ENCODE measurements at regions of chr22 and their contacts with region 1.

Region 1: GRCh38 chr22:49838771-49839717 is 11.4 kb upstream of the BRD1 start:
- DNase-seq: peak; percentile 91 to 98 (median 95)
- H3K4me3 ChIP-seq: peak overlapping the region; percentile 7 to 53
- H3K4me3 Mint-ChIP-seq: peak overlapping the region; percentile 71 to 91 (median 84)
- H3K27ac ChIP-seq: peak overlapping the region; percentile 79
- H3K27ac Mint-ChIP-seq: peak overlapping the region; percentile 80 to 99 (median 97)
- H3K4me1 ChIP-seq: peaks cover 31% of the 10 kb centered on the region
- H3K4me1 Mint-ChIP-seq: peaks cover 16 to 38% (median 25%) of the 10 kb centered on the region in 4 donors
- H3K27me3 ChIP-seq: no peaks in the 10 kb centered on the region
- H3K27me3 Mint-ChIP-seq: no peaks in the 10 kb centered on the region

Region 2: GRCh38 chr22:49415151-49415951 is 423.7 kb before region 1 on chr22:
- CTCF ChIA-PET with region 1: no interaction called
- POLR2A ChIA-PET with region 1: no interaction called
- intact Hi-C with region 1: no loop called
- DNase-seq: no peak
- H3K4me3 ChIP-seq: no peak overlapping the region
- H3K4me3 Mint-ChIP-seq: no peak overlapping the region
- H3K27ac ChIP-seq: no peak overlapping the region
- H3K27ac Mint-ChIP-seq: no peak overlapping the region
- H3K4me1 ChIP-seq: no peaks in the 10 kb centered on the region
- H3K4me1 Mint-ChIP-seq: no peaks in the 10 kb centered on the region
- H3K27me3 ChIP-seq: no peaks in the 10 kb centered on the region
- H3K27me3 Mint-ChIP-seq: peaks cover 5 to 11% of the 10 kb centered on the region in 2 donors

Region 3: GRCh38 chr22:49807780-49808708 is 31.0 kb before region 1 on chr22:
- CTCF ChIA-PET with region 1: no interaction called
- POLR2A ChIA-PET with region 1: interaction called, 5 read pairs
- intact Hi-C with region 1: loop called (anchors 1 kb)
- DNase-seq: peak; percentile 70 to 80 (median 76)
- H3K4me3 ChIP-seq: peak overlapping the region in 1 of 2 donors; percentile 13
- H3K4me3 Mint-ChIP-seq: peak overlapping the region in 7 of 8 donors; percentile 35 to 78 (median 65)
- H3K27ac ChIP-seq: peak overlapping the region; percentile 24
- H3K27ac Mint-ChIP-seq: peak overlapping the region; percentile 83 to 94 (median 87)
- H3K4me1 ChIP-seq: peaks cover 87% of the 10 kb centered on the region
- H3K4me1 Mint-ChIP-seq: peaks cover 52 to 92% (median 70%) of the 10 kb centered on the region in 4 donors
- H3K27me3 ChIP-seq: no peaks in the 10 kb centered on the region
- H3K27me3 Mint-ChIP-seq: no peaks in the 10 kb centered on the region

Region 4: DNA sequence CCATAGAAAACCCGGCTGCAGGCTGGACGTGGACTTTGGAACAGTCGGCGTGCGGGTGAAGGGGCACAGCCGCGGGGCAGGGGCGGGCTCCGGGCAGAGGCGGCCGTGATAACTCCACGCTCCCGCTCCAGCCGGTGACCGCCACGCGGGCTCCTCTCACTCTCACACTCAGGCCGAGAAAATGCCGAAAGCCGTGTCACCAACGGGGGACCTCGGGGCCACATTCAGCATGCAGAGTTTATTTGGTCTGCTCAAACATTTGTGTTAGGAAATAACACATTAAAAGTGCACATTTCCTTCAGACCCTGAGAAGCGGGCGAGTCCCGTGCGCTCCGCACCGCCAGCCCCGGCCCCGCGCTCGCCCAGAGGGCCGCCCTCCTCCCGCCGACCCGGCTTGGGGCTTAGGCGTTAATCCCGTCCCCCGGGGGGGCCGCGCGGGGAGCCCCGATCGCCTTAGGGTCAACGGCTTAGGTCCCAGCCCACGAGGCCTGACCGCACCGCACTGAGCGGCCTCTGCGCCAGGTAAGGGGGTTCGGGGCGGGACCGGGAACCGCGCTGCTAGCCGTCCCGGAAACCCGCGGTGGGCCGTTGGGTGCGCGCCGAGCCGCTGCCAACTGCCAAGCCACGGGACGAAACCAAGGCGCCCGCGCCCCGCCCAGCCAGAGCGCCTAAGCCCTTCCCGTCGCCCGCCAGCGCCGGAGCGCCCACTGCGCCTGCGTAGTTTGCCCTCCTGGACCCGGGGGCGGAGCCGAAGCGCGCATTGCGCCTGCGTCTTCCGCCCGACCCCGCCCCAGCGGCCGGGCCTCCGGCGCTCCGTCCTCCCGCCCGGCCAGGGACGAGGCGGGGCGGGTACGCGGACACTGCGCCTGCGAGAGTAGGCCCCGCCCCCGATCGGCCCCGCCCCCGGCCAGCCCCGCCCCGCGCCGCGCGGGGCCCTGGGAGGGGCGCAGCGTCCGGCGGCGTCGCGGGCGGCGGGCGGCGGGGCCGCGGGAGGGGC is 14.2 kb after region 1 on chr22 and contains the start of gene ZBED4:
- CTCF ChIA-PET with region 1: interaction called, 6 read pairs
- POLR2A ChIA-PET with region 1: interaction called, 23 read pairs
- intact Hi-C with region 1: loop called (anchors 1 kb)
- DNase-seq: peak; percentile 95 to 100 (median 99)
- H3K4me3 ChIP-seq: peak within 1 kb of the TSS; percentile 46 to 69
- H3K4me3 Mint-ChIP-seq: peak within 1 kb of the TSS; percentile 92 to 97 (median 94)
- H3K27ac ChIP-seq: peak within 1 kb of the TSS; percentile 75
- H3K27ac Mint-ChIP-seq: peak within 1 kb of the TSS; percentile 92 to 96 (median 94)
- H3K4me1 ChIP-seq: peaks cover 36% of the 10 kb centered on the region
- H3K4me1 Mint-ChIP-seq: peaks cover 29 to 64% (median 48%) of the 10 kb centered on the region in 4 donors
- H3K27me3 ChIP-seq: no peaks in the 10 kb centered on the region
- H3K27me3 Mint-ChIP-seq: no peaks in the 10 kb centered on the region
- total RNA-seq, gene ZBED4: 17.7 to 18.6 TPM